Activated CD8-positive, alpha-beta memory T cell treated with anti-CD3 and anti-CD28 coated beads, Interleukin-2, amount 10 ng/mL, durations not matched to agents 7 days and 5 days (primary cell): ENCODE measurements at regions of chr22 and their contacts with region 1.

Region 1: GRCh38 chr22:31313366-31314147 is 21.3 kb upstream of the PIK3IP1 start:
- DNase-seq: peak; percentile 69
- ATAC-seq: peak; percentile 69
- H3K4me3 Mint-ChIP-seq: no peak overlapping the region
- H3K27ac Mint-ChIP-seq: no peak overlapping the region
- H3K4me1 Mint-ChIP-seq: peaks cover 6% of the 10 kb centered on the region
- H3K27me3 Mint-ChIP-seq: no peaks in the 10 kb centered on the region

Region 2: DNA sequence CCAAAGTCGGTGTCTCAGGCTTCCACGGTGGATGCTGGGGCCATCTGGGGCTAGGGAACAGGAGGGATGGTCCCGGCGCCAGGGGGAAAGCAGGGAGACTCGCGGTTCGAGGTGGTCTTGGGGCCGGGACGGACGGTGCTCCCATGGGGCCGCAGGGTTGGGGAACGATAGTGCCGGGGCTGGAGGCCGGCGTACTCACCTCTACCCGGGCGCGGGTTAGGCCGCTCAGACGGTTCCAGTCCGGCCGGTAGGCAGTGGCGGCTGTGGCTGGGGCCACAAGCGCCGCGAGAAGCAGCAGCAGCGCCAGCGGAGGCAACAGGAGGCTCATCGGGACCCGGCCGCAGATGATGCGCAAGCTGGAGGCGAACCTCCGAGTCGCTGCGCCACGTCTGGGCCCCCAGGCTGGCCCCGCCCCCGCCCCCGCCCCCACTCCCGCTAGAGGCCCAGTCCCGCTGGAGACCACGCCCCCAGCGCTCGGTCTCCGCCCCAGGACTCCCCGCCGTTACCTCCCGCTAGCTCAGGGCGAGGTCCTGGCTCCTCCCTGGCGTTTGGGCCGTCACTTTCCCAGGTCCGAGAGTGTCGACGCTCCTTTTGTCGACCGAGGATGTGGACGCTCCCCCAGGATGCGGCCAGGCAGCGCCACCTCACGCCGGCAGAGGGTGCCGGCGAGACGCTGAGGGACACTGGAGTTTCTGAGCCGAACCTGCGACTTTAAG is 206.2 kb before region 1 on chr22 and contains the start of gene SELENOM:
- CTCF ChIA-PET with region 1: interaction called, 14 read pairs
- DNase-seq: peak; percentile 92
- ATAC-seq: peak; percentile 97
- H3K4me3 Mint-ChIP-seq: peak within 1 kb of the TSS; percentile 78
- H3K27ac Mint-ChIP-seq: peak within 1 kb of the TSS; percentile 31
- H3K4me1 Mint-ChIP-seq: peaks cover 12% of the 10 kb centered on the region
- H3K27me3 Mint-ChIP-seq: peaks cover 12% of the 10 kb centered on the region
- total RNA-seq, gene SELENOM: 0.49 to 1.5 TPM

Region 3: GRCh38 chr22:31272522-31273446 is 40.8 kb before region 1 on chr22:
- CTCF ChIA-PET with region 1: interaction called, 13 read pairs
- DNase-seq: peak; percentile 64
- ATAC-seq: peak; percentile 68
- H3K4me3 Mint-ChIP-seq: no peak overlapping the region
- H3K27ac Mint-ChIP-seq: no peak overlapping the region
- H3K4me1 Mint-ChIP-seq: no peaks in the 10 kb centered on the region
- H3K27me3 Mint-ChIP-seq: no peaks in the 10 kb centered on the region

Region 4: GRCh38 chr22:31295831-31296657 is 17.5 kb before region 1 on chr22:
- CTCF ChIA-PET with region 1: interaction called, 29 read pairs
- DNase-seq: no peak
- ATAC-seq: no peak
- H3K4me3 Mint-ChIP-seq: no peak overlapping the region
- H3K27ac Mint-ChIP-seq: no peak overlapping the region
- H3K4me1 Mint-ChIP-seq: peaks cover 44% of the 10 kb centered on the region
- H3K27me3 Mint-ChIP-seq: no peaks in the 10 kb centered on the region

Region 5: GRCh38 chr22:31332886-31333285 is 19.3 kb after region 1 on chr22:
- CTCF ChIA-PET with region 1: interaction called, 16 read pairs
- DNase-seq: no peak
- ATAC-seq: no peak
- H3K4me3 Mint-ChIP-seq: no peak overlapping the region
- H3K27ac Mint-ChIP-seq: no peak overlapping the region
- H3K4me1 Mint-ChIP-seq: peaks cover 24% of the 10 kb centered on the region
- H3K27me3 Mint-ChIP-seq: no peaks in the 10 kb centered on the region

Region 6: GRCh38 chr22:31354515-31354914 is 41.0 kb after region 1 on chr22:
- CTCF ChIA-PET with region 1: no interaction called
- DNase-seq: no peak
- ATAC-seq: no peak
- H3K4me3 Mint-ChIP-seq: no peak overlapping the region
- H3K27ac Mint-ChIP-seq: no peak overlapping the region
- H3K4me1 Mint-ChIP-seq: no peaks in the 10 kb centered on the region
- H3K27me3 Mint-ChIP-seq: peaks cover 8% of the 10 kb centered on the region

Region 7: DNA sequence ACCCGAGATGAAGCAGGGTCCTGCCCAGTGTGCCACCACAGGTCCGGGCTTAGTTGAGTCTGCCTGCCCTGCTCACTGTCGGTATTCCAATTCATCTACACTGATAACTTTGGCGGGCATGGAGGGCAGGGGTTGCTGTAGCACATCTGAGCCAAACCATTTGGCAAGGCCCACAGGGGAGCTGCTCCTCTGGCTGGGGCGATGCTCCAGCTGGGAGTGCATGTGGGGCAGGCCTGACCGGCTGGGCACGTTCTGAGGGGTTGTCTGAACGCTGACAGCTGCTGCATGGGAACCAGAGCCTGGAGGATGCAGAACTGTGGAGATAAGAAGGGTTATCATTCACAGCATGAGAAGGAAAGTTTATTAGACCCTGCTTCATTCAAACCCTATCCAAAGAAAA is 126.3 kb after region 1 on chr22:
- CTCF ChIA-PET with region 1: no interaction called
- DNase-seq: no peak
- ATAC-seq: no peak
- H3K4me3 Mint-ChIP-seq: no peak overlapping the region
- H3K27ac Mint-ChIP-seq: no peak overlapping the region
- H3K4me1 Mint-ChIP-seq: peaks cover 2% of the 10 kb centered on the region
- H3K27me3 Mint-ChIP-seq: no peaks in the 10 kb centered on the region